Naive thymus-derived CD8-positive, alpha-beta T cell (primary cell): ENCODE measurements at regions of chr20 and their contacts with region 1.

Region 1: GRCh38 chr20:1281279-1282057 is 15.4 kb downstream of the SNPH start:
- DNase-seq: peak in 1 of 10 donors; percentile 11
- ATAC-seq: peak in 1 of 2 donors; percentile 51
- H3K4me3 Mint-ChIP-seq: peak overlapping the region; percentile 24 to 75 (median 67)
- H3K27ac Mint-ChIP-seq: peak overlapping the region; percentile 75 to 96 (median 85)
- H3K4me1 Mint-ChIP-seq: peaks cover 35 to 67% (median 63%) of the 10 kb centered on the region in 4 donors
- H3K27me3 Mint-ChIP-seq: no peaks in the 10 kb centered on the region

Region 2: DNA sequence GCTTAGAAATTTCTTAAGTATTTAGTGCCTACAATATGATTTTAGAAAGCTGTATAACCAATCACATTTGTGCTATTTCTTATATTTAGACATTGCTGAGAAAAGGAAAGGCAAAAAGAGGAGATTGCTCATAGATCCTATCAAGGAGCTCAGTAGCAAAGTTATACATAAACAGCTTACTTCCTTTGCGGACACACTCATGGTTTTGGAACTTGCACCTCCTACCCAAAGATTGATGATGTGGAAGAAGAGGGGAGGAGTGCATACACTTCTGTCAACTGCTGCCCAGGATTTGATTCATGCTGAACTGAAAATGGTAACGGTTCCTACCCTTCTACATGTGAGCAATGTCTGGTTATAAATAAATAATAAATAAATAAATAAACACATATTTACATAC is 38.9 kb before region 1 on chr20:
- POLR2A ChIA-PET with region 1: no interaction called
- DNase-seq: no peak
- ATAC-seq: no peak
- H3K4me3 Mint-ChIP-seq: no peak overlapping the region
- H3K27ac Mint-ChIP-seq: no peak overlapping the region
- H3K4me1 Mint-ChIP-seq: peaks cover 0 to 2% (median under 1%) of the 10 kb centered on the region in 4 donors
- H3K27me3 Mint-ChIP-seq: peaks cover 0 to 16% (median 4%) of the 10 kb centered on the region in 5 donors

Region 3: DNA sequence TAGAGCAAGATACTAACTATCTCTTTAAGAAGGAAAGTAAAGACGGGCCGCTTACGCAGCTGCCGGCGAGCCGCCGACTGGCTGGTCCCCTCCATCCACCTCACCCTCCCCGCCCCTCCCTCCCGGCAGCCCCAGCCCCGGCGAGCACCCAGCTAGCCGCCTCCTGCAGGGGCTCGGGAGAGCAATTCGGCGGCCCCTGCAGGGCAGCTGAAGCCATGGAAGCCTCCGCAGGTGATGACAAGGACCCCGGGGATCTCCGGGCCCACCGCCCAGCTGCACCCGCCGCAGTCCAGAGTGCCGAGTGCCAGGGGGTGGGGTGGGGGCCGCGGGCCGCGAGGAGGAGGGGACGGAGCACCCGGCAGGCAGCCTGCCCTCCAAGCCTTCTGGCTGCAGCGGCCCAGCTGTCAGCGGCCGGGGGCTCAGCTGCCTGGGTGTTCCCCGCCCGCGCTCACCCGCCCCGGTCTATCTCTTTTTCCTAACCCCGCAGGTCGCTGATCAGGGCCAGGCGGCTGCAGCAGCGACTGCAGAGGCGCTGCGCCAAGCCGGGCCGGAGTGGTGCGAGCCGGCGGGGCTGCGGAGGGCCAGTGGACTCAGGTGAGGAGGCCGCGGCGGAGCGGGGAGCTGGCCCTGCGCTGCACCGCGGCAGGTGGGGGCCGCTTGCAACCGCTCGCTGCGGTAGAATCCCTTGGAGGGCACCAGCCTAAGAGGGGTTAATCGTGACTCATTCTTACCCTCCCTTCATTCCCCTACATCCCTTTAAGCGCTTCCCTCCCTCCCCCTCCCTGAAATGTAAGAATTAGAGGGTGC is 15.1 kb before region 1 on chr20 and contains the start of gene SNPH:
- POLR2A ChIA-PET with region 1: interaction called, 33 read pairs
- DNase-seq: peak; percentile 63 to 87 (median 70)
- ATAC-seq: peak; percentile 90 to 91
- H3K4me3 Mint-ChIP-seq: peak within 1 kb of the TSS; percentile 86 to 99 (median 94)
- H3K27ac Mint-ChIP-seq: peak within 1 kb of the TSS; percentile 96 to 100 (median 99)
- H3K4me1 Mint-ChIP-seq: peaks cover 35 to 72% (median 67%) of the 10 kb centered on the region in 4 donors
- H3K27me3 Mint-ChIP-seq: peaks cover 0 to 3% (median 0%) of the 10 kb centered on the region in 5 donors
- polyA plus RNA-seq, gene SNPH: 5.2 to 13.5 (median 6.3) TPM

Region 4: GRCh38 chr20:1299522-1299921 is 18.1 kb after region 1 on chr20:
- POLR2A ChIA-PET with region 1: interaction called, 14 read pairs
- DNase-seq: peak in 6 of 10 donors; percentile 12 to 64 (median 40)
- ATAC-seq: peak; percentile 59 to 66
- H3K4me3 Mint-ChIP-seq: peak overlapping the region in 8 of 10 donors; percentile 44 to 88 (median 72)
- H3K27ac Mint-ChIP-seq: peak overlapping the region in 9 of 10 donors; percentile 47 to 98 (median 90)
- H3K4me1 Mint-ChIP-seq: peaks cover 27 to 53% (median 37%) of the 10 kb centered on the region in 4 donors
- H3K27me3 Mint-ChIP-seq: no peaks in the 10 kb centered on the region